Activated naive CD4-positive, alpha-beta T cell treated with anti-CD3 and anti-CD28 coated beads for 36 hours (primary cell): ENCODE measurements at regions of chr15 and their contacts with region 1.

Region 1: GRCh38 chr15:45611305-45611704 is 23.5 kb upstream of the SQOR start:
- DNase-seq: no peak
- H3K4me3 Mint-ChIP-seq: no peak overlapping the region
- H3K27ac Mint-ChIP-seq: no peak overlapping the region
- H3K4me1 Mint-ChIP-seq: peaks cover 9% of the 10 kb centered on the region
- H3K27me3 Mint-ChIP-seq: no peaks in the 10 kb centered on the region

Region 2: GRCh38 chr15:45429974-45430792 is 181.1 kb before region 1 on chr15:
- CTCF ChIA-PET with region 1: interaction called, 16 read pairs
- intact Hi-C with region 1: loop called (anchors 1 kb)
- DNase-seq: peak; percentile 83
- H3K4me3 Mint-ChIP-seq: peak overlapping the region; percentile 51
- H3K27ac Mint-ChIP-seq: no peak overlapping the region
- H3K4me1 Mint-ChIP-seq: peaks cover 2% of the 10 kb centered on the region
- H3K27me3 Mint-ChIP-seq: peaks cover 4% of the 10 kb centered on the region

Region 3: DNA sequence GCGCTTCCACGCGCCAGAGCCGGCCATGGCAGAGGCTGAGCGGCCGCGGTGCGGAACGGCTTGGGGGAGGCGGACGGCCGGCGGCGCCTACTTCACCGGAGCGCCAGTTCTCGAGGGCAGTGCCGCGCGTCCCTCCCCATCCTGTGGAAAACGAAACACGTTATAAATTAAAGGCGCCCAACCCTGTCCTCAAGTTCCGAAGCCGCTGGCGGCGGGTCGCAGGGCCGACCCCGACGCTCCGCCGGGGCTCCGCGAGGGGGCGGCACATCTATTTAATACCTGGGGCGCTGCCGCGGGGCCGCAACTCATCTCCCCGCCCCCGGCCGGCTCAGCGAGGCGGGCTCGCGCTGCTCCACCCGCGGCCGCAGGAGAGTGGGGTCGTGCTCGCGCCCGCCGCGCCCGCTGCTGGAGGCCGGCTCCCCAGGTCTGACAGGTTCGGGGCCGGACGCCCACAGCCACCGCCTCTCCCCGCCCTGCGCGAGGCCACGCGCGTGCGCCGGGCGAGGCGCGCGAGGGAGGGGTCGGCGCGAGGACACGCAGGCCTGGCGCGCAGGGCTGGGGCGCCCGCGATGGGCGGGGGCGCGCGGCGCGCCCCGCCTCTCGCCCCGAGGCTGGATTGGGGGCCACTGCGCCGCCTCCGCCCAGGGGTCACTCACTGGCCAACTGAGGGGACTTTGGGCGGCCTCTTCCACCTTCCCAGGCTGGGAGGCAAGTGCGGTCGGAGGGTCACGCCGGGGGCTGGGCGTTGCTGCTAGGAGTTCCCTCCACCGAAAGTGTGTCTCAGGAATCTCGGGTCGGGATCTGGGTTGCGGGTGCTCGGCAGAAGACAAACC is 88.8 kb before region 1 on chr15 and contains the start of gene SLC30A4:
- CTCF ChIA-PET with region 1: interaction called, 5 read pairs
- intact Hi-C with region 1: loop called (anchors 1 kb)
- DNase-seq: peak; percentile 46
- H3K4me3 Mint-ChIP-seq: peak within 1 kb of the TSS; percentile 89
- H3K27ac Mint-ChIP-seq: no peak within 1 kb of the TSS
- H3K4me1 Mint-ChIP-seq: peaks cover 15% of the 10 kb centered on the region
- H3K27me3 Mint-ChIP-seq: no peaks in the 10 kb centered on the region
- total RNA-seq, gene SLC30A4: 1.0 to 1.2 TPM

Region 4: GRCh38 chr15:45587095-45587860 is 24.0 kb before region 1 on chr15 and contains the start of gene BLOC1S6:
- CTCF ChIA-PET with region 1: interaction called, 13 read pairs
- intact Hi-C with region 1: loop called (anchors 1 kb)
- DNase-seq: peak; percentile 91
- H3K4me3 Mint-ChIP-seq: peak within 1 kb of the TSS; percentile 100
- H3K27ac Mint-ChIP-seq: peak within 1 kb of the TSS; percentile 100
- H3K4me1 Mint-ChIP-seq: peaks cover 41% of the 10 kb centered on the region
- H3K27me3 Mint-ChIP-seq: no peaks in the 10 kb centered on the region
- total RNA-seq, gene BLOC1S6: 36.8 to 42.8 TPM

Region 5: DNA sequence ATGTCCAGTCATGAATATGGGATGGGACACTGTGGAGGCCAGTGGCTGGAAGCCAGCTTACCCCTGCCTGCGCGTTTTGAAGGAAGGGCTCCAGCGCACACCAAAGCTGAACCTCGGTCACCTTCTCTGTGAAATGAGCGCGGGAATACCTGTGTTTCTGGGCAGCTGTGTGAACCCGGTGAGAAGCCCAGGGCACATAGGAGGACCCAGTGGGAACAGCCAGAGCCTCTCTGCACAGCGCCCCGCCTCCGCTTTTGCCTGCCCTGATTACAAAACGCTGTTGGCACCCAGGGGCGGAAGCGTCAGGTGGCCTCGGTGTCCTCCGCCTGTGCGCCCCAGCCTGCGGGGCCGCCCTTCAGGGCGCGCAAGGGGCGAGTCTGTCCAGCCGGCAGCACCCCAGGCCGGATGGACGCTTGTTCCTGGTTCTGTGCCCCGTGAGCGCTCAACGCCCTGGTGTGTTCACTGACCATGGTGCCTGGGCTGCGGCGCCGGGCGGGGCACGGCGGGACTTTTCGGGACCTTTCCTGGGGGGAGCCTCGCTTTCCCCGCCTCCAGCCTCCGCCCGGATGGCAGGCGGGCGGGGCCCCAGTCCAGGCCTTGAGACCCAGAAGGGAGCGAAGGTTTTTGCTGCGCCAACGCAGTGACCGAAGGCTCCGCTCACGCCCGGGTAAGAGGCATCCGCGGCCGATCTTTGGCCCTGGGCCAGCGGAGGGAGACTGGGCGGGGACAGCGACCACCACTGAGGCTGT is 23.3 kb after region 1 on chr15 and contains the start of gene SQOR:
- CTCF ChIA-PET with region 1: interaction called, 8 read pairs
- intact Hi-C with region 1: loop called (anchors 1 kb)
- DNase-seq: peak; percentile 76
- H3K4me3 Mint-ChIP-seq: peak within 1 kb of the TSS; percentile 99
- H3K27ac Mint-ChIP-seq: peak within 1 kb of the TSS; percentile 86
- H3K4me1 Mint-ChIP-seq: peaks cover 43% of the 10 kb centered on the region
- H3K27me3 Mint-ChIP-seq: no peaks in the 10 kb centered on the region
- total RNA-seq, gene SQOR: 54.3 to 56.4 TPM

Region 6: GRCh38 chr15:45790325-45790943 is 179.1 kb after region 1 on chr15:
- CTCF ChIA-PET with region 1: no interaction called
- intact Hi-C with region 1: loop called (anchors 5 kb)
- DNase-seq: peak; percentile 47
- H3K4me3 Mint-ChIP-seq: no peak overlapping the region
- H3K27ac Mint-ChIP-seq: no peak overlapping the region
- H3K4me1 Mint-ChIP-seq: no peaks in the 10 kb centered on the region
- H3K27me3 Mint-ChIP-seq: peaks cover 10% of the 10 kb centered on the region